ENCODE measurements at regions of chr14 and their contacts with region 1.

Region 1: DNA sequence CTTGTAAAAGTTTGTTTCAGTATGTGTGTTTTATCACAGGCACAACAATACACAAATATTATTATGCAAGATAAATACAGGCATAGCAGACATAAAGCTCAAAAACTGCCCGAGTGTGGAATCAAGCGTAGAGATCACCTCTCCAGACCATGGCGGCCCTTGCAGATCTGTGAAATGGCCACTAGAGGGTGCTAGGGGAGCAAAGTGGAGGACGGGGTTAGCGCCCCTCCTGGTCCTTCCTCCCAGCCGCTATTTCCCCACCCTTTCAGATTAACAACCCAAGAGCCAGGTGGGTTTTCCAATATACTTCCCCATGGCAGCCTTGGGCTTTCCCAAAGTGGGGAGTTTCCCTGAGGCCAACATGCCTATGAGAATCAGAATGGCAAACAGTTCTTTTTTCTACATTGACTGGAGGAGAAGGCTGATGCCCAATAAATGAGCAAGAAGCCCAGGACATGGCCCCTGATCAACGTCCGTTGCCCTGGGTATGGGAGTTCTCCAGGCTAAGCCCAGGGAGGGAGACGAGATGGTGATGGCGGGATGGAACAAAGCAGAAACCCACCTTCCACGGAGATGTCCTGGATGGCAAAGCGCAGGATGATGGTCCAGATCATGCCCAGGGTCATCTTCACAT is 67.4 kb downstream of the ACTN1 start:
- DNase-seq: peak; percentile 88
- ATAC-seq: peak; percentile 95
- H3K4me3 Mint-ChIP-seq: no peak overlapping the region
- H3K27ac Mint-ChIP-seq: no peak overlapping the region
- H3K4me1 Mint-ChIP-seq: peaks cover 21% of the 10 kb centered on the region
- H3K27me3 Mint-ChIP-seq: no peaks in the 10 kb centered on the region

Region 2: DNA sequence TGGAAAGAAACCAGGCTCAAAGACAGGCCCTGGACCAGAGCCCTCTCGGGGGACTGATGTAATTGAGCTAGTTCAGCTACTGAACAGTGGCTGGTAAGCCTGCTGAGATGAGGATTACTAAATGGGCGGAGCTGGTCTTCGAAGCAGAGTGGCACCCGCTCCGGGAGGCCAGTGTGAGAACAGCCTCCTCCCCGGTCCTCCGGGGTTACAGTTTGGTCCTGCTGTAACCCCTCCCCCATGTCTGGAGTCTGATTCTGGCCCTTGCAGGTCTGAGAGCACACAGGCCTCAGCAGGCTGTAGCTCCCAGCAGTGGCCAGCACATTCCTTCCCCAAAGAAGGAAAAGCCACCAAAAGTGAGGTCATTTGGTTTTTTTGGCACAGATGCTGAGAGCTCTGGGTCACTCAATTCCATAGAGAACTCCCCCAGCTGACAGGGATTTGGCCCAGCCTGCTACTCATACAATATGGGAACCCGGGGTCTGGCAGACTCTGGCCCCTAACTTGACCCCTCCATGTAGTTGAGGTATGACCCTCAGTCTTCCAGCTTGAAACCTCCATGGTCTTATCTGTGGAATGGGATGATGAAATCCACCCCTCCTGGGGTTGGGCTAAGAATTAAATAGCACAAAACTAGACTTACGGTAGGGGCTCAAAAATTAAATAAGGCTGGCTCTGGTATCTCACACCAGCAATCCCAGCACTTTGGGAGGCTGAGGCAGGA is 28.3 kb after region 1 on chr14:
- CTCF ChIA-PET with region 1: interaction called, 12 read pairs
- POLR2A ChIA-PET with region 1: no interaction called
- DNase-seq: no peak
- ATAC-seq: no peak
- H3K4me3 Mint-ChIP-seq: no peak overlapping the region
- H3K27ac Mint-ChIP-seq: peak overlapping the region; percentile 42
- H3K4me1 Mint-ChIP-seq: peaks cover 54% of the 10 kb centered on the region
- H3K27me3 Mint-ChIP-seq: no peaks in the 10 kb centered on the region

Region 3: DNA sequence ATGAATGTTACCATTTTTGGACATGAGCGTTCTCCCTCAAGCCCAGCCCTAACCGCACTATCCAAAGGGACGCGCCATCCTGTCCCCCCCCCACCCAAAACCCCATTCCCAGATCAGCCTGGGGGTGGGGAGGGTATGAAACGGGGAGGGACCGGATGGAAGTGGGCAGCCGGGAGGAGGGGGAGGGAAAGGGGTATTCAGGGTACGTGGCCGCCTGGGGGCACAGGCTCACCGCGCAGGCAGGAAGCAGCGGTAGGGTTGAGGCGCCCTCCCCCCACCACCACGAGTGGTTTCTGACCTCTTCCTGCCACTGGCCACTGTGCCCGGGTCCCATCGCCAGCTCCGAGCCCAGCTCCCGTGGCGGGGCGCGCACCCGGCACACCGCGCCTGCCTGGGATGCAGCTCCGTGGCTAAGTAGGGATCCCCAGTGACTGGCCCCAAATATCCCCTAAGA is 66.0 kb after region 1 on chr14:
- CTCF ChIA-PET with region 1: interaction called, 13 read pairs
- POLR2A ChIA-PET with region 1: interaction called, 3 read pairs
- DNase-seq: peak; percentile 80
- ATAC-seq: peak; percentile 40
- H3K4me3 Mint-ChIP-seq: peak overlapping the region; percentile 82
- H3K27ac Mint-ChIP-seq: peak overlapping the region; percentile 86
- H3K4me1 Mint-ChIP-seq: peaks cover 39% of the 10 kb centered on the region
- H3K27me3 Mint-ChIP-seq: peaks cover 19% of the 10 kb centered on the region

Region 4: DNA sequence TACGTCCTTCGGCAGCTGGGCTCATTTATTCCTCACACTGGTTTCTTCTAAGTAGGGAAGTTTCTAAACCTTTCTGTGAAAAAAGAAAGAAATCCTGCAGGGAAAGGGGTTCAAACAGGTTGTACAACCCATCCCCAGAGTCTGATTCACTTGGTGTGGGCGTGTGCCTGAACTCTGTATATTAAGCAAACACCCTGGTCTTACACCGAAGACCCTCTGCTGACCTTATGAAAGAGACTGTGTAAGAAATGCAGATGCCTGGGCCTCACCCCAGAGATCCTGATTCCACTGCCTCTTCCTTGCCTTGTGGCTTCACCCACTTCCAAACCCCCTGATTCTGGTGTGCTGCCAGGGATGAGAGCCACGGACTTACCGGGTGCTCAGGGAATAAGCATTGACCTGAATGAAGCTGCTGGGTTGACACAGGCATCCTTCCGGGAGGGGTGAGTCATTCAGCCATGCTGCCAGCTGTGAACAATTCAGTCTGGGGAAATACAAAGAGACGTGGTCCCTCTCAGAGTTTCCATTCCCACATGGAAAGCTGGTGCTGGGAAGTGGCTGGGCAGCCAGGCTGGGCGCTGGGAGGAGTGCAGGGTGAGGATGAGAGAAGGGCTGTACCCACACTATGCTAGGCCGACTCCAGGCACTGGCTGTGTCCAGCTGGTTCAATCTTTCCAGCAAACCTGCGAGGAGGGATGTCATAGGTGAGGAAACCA is 93.9 kb after region 1 on chr14:
- CTCF ChIA-PET with region 1: interaction called, 52 read pairs
- POLR2A ChIA-PET with region 1: no interaction called
- DNase-seq: no peak
- ATAC-seq: no peak
- H3K4me3 Mint-ChIP-seq: no peak overlapping the region
- H3K27ac Mint-ChIP-seq: no peak overlapping the region
- H3K4me1 Mint-ChIP-seq: peaks cover 13% of the 10 kb centered on the region
- H3K27me3 Mint-ChIP-seq: peaks cover 5% of the 10 kb centered on the region

Region 5: DNA sequence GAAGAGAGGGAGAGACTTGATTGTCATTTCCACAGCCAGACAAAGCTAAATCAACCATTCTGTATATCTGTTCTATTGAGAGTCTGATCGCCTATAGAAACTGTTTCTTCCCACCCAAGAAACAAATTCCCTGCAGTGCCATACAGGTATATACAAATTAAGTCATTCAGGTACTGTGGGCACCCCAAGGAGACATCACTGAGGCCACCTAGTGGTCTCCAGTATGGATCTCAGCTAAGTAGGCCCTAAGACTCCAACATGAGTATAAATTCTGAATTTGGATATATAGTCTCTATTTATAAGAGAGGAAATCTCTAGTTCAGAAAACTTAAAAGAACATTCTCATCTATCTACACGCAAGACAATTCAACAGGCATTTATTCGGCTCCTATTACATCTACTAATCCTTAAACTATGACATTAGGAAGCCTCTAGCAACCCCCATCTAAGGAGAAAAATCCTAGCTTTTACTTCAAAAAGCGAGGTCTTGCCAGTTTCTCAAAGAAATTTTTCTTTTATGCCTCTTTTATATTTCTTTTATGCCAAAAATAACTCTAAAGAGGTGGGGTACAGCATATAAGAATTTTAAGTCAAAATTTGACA is 178.6 kb after region 1 on chr14:
- CTCF ChIA-PET with region 1: interaction called, 85 read pairs
- POLR2A ChIA-PET with region 1: no interaction called
- DNase-seq: peak; percentile 51
- ATAC-seq: peak; percentile 47
- H3K4me3 Mint-ChIP-seq: no peak overlapping the region
- H3K27ac Mint-ChIP-seq: no peak overlapping the region
- H3K4me1 Mint-ChIP-seq: peaks cover 12% of the 10 kb centered on the region
- H3K27me3 Mint-ChIP-seq: no peaks in the 10 kb centered on the region

Region 6: DNA sequence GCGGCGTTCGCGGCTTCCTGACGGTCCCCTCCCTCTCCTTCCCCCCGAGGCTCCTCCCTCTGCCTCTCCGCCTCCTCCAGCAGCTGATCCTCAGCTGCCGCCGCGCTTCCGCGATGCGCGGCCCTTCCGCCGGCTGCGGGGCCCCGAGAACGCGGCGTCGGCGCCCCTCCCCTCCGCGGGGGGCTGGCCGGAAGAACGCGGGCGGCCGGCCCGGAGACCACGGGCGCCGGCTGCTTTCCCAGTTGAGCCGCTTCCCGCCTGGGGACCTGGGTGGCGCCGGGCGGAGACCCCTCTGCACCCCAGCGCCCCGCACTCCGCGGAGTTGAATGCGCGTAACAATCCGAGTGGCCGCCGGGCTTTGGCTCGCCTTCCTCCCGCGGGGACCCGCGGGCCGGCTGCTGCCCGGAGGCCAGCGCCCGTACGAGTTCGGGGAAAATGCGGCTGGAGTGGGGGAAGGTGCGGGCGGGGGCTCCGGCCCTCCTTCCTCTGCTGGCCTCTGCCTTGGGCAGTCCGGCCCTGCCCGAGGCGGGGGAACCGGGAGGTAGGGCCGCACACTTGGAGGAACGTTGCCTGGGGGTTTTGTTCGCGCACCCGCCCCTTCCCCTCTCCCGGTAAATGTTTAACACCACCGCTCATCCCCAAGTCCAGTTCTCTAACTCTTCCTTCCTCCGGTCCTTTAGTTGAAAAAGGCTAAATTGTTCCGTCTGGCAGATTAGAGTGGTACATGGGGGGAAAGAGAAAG is 241.6 kb after region 1 on chr14:
- CTCF ChIA-PET with region 1: interaction called, 13 read pairs
- POLR2A ChIA-PET with region 1: no interaction called
- DNase-seq: peak; percentile 97
- ATAC-seq: peak; percentile 95
- H3K4me3 Mint-ChIP-seq: peak overlapping the region; percentile 92
- H3K27ac Mint-ChIP-seq: peak overlapping the region; percentile 86
- H3K4me1 Mint-ChIP-seq: peaks cover 31% of the 10 kb centered on the region
- H3K27me3 Mint-ChIP-seq: peaks cover 24% of the 10 kb centered on the region